H1 (cell line): ENCODE measurements at regions of chr10 and their contacts with region 1.

Region 1: DNA sequence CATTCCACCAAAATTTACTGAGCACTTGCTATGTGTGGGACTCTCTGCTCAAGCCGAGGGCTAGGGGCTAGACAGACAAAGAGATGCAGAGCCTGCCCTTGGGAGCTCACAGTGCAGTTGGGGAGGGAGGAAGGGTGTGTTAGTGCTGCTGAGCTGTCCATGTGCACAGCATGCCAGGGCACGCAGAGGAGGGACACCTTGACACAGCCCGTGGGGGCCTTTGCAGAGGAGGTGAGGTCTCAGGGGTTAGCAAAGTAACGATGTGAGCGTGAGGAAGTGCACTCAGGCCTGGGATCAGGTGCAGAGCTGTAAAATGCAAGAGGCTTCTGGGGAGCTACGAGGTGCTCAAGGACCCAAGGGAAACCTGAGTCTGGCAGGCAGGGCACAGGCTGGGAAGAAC is 16.3 kb downstream of the PRKCQ start:
- DNase-seq: no peak
- H3K4me3 ChIP-seq: no peak overlapping the region
- H3K27ac ChIP-seq: no peak overlapping the region
- H3K4me1 ChIP-seq: peaks cover 0 to 10% (median 3%) of the 10 kb centered on the region in 4 experiments; a peak in 4 of 7 replicates
- H3K27me3 ChIP-seq: no peaks in the 10 kb centered on the region
- CTCF ChIP-seq: no peak
- EP300 ChIP-seq: no peak
- POLR2A ChIP-seq: no peak
- RAD21 ChIP-seq: no peak

Region 2: GRCh38 chr10:6580279-6581029 is 16.7 kb after region 1 on chr10:
- CTCF ChIA-PET with region 1: interaction called, 11 read pairs
- POLR2A ChIA-PET with region 1: interaction called, 3 read pairs
- DNase-seq: peak; percentile 44 to 92
- H3K4me3 ChIP-seq: peak overlapping the region; percentile 54 to 76 (median 72)
- H3K27ac ChIP-seq: peak overlapping the region; percentile 60; the same call in 1 of the 2 replicates
- H3K4me1 ChIP-seq: peaks cover 2 to 9% (median 8%) of the 10 kb centered on the region in 4 experiments; a peak in 6 of 7 replicates
- H3K27me3 ChIP-seq: peaks cover 0 to 5% (median 2%) of the 10 kb centered on the region in 4 experiments; a peak in 4 of 7 replicates
- CTCF ChIP-seq: peak; percentile 34 to 63 (median 58)
- EP300 ChIP-seq: 0 out of 3 replicates have a peak, but pooled peaks of 1 of the 2 experiments have one; percentile 21
- POLR2A ChIP-seq: peak; percentile 60 to 65; a peak in 2 of 3 replicates
- RAD21 ChIP-seq: peak; percentile 28 to 56